Naive thymus-derived CD4-positive, alpha-beta T cell (primary cell): ENCODE measurements at regions of chr1 and their contacts with region 1.

Region 1: DNA sequence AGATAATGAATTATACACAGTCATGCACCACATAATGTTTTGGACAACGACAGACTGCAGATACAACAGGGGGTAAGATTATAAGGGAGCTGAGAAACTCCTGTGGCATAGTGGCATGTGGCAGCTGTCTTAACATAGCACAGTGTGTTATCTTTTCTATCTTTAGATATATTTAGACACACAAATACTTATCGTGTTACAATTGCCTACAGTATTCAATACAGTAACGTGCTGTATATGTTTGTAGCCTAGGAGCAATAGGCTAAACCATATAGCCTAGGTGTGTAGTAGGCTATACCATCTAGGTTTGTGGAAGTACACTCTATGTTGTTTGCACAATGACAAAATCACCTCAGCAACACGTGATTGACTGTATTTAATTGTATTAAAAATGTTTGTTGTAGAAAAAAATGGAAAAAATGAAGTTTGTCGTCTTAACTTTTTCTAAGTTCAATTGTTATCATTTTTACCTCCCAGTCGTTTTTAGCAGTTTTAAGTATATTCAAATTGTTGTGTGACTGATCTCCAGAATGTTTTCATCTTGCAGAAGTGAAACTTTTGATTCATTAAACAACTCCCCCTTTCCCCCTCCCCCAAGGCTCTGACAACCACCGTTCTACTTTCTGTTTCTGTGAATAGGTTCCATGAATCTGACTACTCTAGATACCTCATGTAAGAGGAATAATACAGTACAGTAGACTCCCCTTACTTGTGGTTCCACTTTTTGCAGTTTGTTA is 351.0 kb upstream of the B3GALT2 start:
- DNase-seq: peak in 7 of 9 donors; percentile 23 to 54 (median 45)
- ATAC-seq: peak; percentile 77
- H3K4me3 ChIP-seq: peak overlapping the region; percentile 32
- H3K4me3 Mint-ChIP-seq: peak overlapping the region in 9 of 10 donors; percentile 17 to 65 (median 44)
- H3K27ac ChIP-seq: no peak overlapping the region
- H3K27ac Mint-ChIP-seq: peak overlapping the region in 5 of 9 donors; percentile 2 to 89 (median 45)
- H3K4me1 ChIP-seq: peaks cover 14 to 41% of the 10 kb centered on the region in 2 donors
- H3K4me1 Mint-ChIP-seq: peaks cover 13 to 57% (median 46%) of the 10 kb centered on the region in 7 donors
- H3K27me3 ChIP-seq: no peaks in the 10 kb centered on the region
- H3K27me3 Mint-ChIP-seq: no peaks in the 10 kb centered on the region

Region 2: DNA sequence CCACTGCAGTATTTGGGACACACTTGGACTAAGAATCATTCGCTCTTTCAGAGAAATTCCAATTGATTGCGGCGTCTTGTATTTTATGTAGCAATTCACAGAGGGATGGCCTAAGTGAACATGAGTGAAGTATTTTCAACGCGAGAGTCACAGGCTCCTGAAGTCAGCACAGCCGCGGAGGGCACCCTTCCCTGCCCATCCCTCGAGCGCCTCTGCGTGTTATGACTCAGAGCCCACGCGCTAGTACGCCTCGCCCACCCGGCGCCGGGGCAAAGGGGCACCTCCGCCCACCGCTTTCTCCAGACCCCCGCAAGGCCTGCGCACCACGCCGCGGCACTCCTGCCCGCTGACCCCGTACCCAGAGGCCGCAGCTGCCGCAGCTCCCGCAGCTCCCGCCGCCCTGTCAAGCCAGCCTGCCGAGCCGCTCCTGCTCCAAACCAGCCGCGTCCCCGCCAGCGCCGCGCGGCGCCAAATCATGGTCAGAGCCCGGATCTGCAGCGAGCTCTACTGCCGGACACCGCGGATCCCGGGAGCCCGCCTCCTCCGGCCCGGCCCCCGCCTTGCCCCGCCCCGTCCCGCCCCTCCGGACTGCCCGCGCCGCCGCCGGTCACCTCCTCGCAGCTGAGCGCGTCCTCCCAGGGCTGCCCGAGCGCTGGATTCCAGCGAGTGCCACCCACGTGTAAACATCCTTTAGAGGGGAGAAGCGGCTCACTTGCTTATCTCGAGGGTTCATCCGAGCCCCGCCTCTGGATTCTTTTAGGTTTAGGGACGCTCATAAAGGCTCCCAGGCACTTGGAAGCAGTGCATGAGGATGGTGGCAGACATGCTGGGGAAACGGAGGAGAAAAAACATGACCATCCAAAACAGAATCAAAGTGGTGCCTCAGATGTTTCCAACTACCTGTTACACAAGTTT is 432.3 kb before region 1 on chr1 and contains the start of gene GLRX2:
- CTCF ChIA-PET with region 1: no interaction called
- POLR2A ChIA-PET with region 1: no interaction called
- intact Hi-C with region 1: loop called in 1 of 2 experiments (anchors 5 kb)
- DNase-seq: peak; percentile 30 to 68 (median 48)
- ATAC-seq: peak; percentile 91
- H3K4me3 ChIP-seq: peak within 1 kb of the TSS; percentile 67
- H3K4me3 Mint-ChIP-seq: peak within 1 kb of the TSS; percentile 91 to 98 (median 94)
- H3K27ac ChIP-seq: peak within 1 kb of the TSS; percentile 57
- H3K27ac Mint-ChIP-seq: peak within 1 kb of the TSS; percentile 75 to 94 (median 81)
- H3K4me1 ChIP-seq: peaks cover 3 to 16% of the 10 kb centered on the region in 2 donors
- H3K4me1 Mint-ChIP-seq: peaks cover 13 to 28% (median 21%) of the 10 kb centered on the region in 7 donors
- H3K27me3 ChIP-seq: no peaks in the 10 kb centered on the region
- H3K27me3 Mint-ChIP-seq: peaks cover 0 to 9% (median 0%) of the 10 kb centered on the region in 5 donors
- total RNA-seq, gene GLRX2: 6.8 to 18.8 (median 11.4) TPM

Region 3: DNA sequence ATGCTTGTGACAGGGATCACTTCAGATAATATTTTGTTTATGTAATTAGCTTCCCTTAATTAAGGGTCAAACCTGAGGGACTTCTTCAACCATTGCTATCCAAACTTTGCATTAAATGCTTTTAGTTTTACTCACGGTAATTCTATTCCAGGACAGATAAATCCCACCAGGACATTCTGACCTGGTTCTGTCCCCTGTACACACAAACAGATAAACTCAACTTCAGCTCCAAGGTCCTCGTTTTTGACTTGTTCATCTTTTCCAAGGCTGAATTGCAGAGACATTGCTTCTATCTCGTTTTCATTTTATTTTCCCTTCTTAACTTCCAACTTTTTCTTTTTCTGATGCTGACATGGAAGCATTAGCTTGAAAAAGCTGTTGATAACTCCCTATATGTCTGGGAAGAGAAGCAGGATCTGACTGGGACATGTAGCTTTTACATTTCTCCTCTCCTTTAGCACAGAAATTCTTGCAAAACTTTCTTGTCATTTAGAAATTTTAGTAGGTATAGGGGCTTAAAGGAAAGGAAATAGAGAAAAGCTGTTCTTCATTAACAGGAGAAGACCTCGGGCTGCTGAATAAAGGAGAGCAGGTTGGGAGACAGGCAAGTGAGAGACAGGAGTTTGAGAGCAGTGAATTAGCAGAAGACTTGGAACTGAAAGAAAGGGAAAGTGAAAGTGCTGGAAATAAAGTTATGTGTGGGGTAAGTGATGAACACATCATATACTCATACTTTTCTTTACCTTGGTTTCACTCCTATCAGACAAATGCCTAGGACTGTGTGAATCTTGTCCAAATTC is 119.3 kb before region 1 on chr1:
- CTCF ChIA-PET with region 1: no interaction called
- POLR2A ChIA-PET with region 1: no interaction called
- intact Hi-C with region 1: loop called in 1 of 2 experiments (anchors 2 kb)
- DNase-seq: peak in 7 of 9 donors; percentile 16 to 64 (median 47)
- ATAC-seq: peak; percentile 81
- H3K4me3 ChIP-seq: peak overlapping the region; percentile 45
- H3K4me3 Mint-ChIP-seq: peak overlapping the region; percentile 68 to 93 (median 87)
- H3K27ac ChIP-seq: peak overlapping the region; percentile 58
- H3K27ac Mint-ChIP-seq: peak overlapping the region; percentile 88 to 95 (median 91)
- H3K4me1 ChIP-seq: peaks cover 16 to 19% of the 10 kb centered on the region in 2 donors
- H3K4me1 Mint-ChIP-seq: peaks cover 15 to 57% (median 46%) of the 10 kb centered on the region in 7 donors
- H3K27me3 ChIP-seq: no peaks in the 10 kb centered on the region
- H3K27me3 Mint-ChIP-seq: no peaks in the 10 kb centered on the region

Region 4: DNA sequence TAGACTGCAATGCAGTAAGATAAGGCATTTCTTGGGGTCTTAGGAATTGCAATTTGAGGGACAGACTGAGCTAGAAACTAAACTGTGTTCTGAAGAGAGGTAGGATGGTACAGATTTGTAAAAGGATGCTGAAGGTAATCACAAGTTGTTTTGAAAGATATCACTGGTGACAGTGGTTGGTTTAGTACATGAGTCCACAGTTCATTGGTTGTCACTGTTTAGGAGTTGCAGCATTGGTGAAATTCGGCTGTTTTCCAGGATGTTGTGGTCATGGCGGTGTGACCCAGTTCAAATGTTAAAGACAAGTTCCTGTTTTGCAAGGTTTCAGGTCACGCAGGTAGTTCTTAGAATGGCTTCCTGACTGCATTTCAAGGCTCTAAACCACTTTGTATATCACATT is 58.2 kb before region 1 on chr1:
- CTCF ChIA-PET with region 1: no interaction called
- POLR2A ChIA-PET with region 1: interaction called, 17 read pairs
- intact Hi-C with region 1: loop called (anchors 1 kb)
- DNase-seq: peak; percentile 18 to 95 (median 91)
- ATAC-seq: peak; percentile 97
- H3K4me3 ChIP-seq: peak overlapping the region; percentile 24
- H3K4me3 Mint-ChIP-seq: peak overlapping the region; percentile 23 to 72 (median 60)
- H3K27ac ChIP-seq: peak overlapping the region; percentile 37
- H3K27ac Mint-ChIP-seq: peak overlapping the region; percentile 85 to 99 (median 94)
- H3K4me1 ChIP-seq: peaks cover 31 to 38% of the 10 kb centered on the region in 2 donors
- H3K4me1 Mint-ChIP-seq: peaks cover 27 to 72% (median 56%) of the 10 kb centered on the region in 7 donors
- H3K27me3 ChIP-seq: no peaks in the 10 kb centered on the region
- H3K27me3 Mint-ChIP-seq: no peaks in the 10 kb centered on the region

Region 5: DNA sequence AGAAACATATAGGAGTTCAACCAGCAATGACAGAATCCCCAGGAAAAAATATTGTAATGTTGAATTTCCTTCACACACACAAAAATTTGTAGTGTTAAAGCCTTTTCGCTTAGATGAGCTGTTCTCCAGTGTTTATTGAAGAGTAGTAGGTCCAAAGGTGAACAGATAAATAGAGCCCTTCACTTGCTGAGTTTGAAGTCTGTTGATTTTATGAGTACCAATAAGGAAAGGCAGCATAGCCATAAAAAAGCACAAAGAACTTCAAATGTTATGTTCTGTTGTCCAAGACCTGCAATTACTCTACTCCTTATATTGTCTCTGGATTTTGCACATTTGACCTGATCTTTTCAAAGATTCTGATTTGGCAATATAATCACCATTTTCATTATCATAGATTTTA is 11.6 kb after region 1 on chr1:
- CTCF ChIA-PET with region 1: no interaction called
- POLR2A ChIA-PET with region 1: interaction called, 12 read pairs
- intact Hi-C with region 1: no loop called
- DNase-seq: no peak
- ATAC-seq: no peak
- H3K4me3 ChIP-seq: no peak overlapping the region
- H3K4me3 Mint-ChIP-seq: peak overlapping the region in 1 of 10 donors; percentile 1
- H3K27ac ChIP-seq: no peak overlapping the region
- H3K27ac Mint-ChIP-seq: no peak overlapping the region
- H3K4me1 ChIP-seq: no peaks in the 10 kb centered on the region
- H3K4me1 Mint-ChIP-seq: peaks cover 0 to 14% (median 9%) of the 10 kb centered on the region in 7 donors
- H3K27me3 ChIP-seq: no peaks in the 10 kb centered on the region
- H3K27me3 Mint-ChIP-seq: no peaks in the 10 kb centered on the region

Region 6: GRCh38 chr1:193589597-193590040 is 52.2 kb after region 1 on chr1:
- CTCF ChIA-PET with region 1: no interaction called
- POLR2A ChIA-PET with region 1: no interaction called
- intact Hi-C with region 1: loop called in 1 of 2 experiments (anchors 1 kb)
- DNase-seq: no peak
- ATAC-seq: no peak
- H3K4me3 ChIP-seq: no peak overlapping the region
- H3K4me3 Mint-ChIP-seq: no peak overlapping the region
- H3K27ac ChIP-seq: no peak overlapping the region
- H3K27ac Mint-ChIP-seq: peak overlapping the region in 1 of 9 donors; percentile 26
- H3K4me1 ChIP-seq: no peaks in the 10 kb centered on the region
- H3K4me1 Mint-ChIP-seq: peaks cover 5 to 34% (median 11%) of the 10 kb centered on the region in 7 donors
- H3K27me3 ChIP-seq: no peaks in the 10 kb centered on the region
- H3K27me3 Mint-ChIP-seq: no peaks in the 10 kb centered on the region

Region 7: DNA sequence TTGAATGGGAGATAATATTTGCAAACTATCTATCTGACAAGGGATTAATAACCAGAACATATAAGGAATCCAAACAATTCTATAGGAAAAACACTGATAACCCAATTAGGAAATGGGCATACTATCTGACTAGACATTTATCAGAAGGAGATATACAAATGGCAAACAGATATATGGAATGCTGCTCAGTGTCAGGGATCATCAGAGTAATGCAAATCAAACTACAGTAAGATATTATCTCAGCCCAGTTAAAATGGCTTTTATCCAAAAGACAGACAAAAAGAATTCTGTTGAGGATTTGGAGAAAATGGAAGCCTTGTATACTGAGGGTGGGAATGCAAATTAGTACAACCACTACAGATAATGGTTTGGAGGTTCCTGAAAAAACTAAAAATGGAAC is 407.0 kb after region 1 on chr1:
- CTCF ChIA-PET with region 1: no interaction called
- POLR2A ChIA-PET with region 1: no interaction called
- intact Hi-C with region 1: no loop called
- DNase-seq: no peak
- ATAC-seq: no peak
- H3K4me3 ChIP-seq: no peak overlapping the region
- H3K4me3 Mint-ChIP-seq: no peak overlapping the region
- H3K27ac ChIP-seq: no peak overlapping the region
- H3K27ac Mint-ChIP-seq: no peak overlapping the region
- H3K4me1 ChIP-seq: no peaks in the 10 kb centered on the region
- H3K4me1 Mint-ChIP-seq: peaks cover 0 to 6% (median 0%) of the 10 kb centered on the region in 7 donors
- H3K27me3 ChIP-seq: no peaks in the 10 kb centered on the region
- H3K27me3 Mint-ChIP-seq: no peaks in the 10 kb centered on the region

Region 8: GRCh38 chr1:194289569-194290266 is 752.3 kb after region 1 on chr1:
- CTCF ChIA-PET with region 1: no interaction called
- POLR2A ChIA-PET with region 1: no interaction called
- intact Hi-C with region 1: loop called in 1 of 2 experiments (anchors 5 kb)
- DNase-seq: peak in 8 of 9 donors; percentile 23 to 84 (median 76)
- ATAC-seq: peak; percentile 97
- H3K4me3 ChIP-seq: peak overlapping the region; percentile 0
- H3K4me3 Mint-ChIP-seq: peak overlapping the region; percentile 38 to 71 (median 54)
- H3K27ac ChIP-seq: no peak overlapping the region
- H3K27ac Mint-ChIP-seq: peak overlapping the region in 7 of 9 donors; percentile 43 to 84 (median 69)
- H3K4me1 ChIP-seq: peaks cover 14 to 21% of the 10 kb centered on the region in 2 donors
- H3K4me1 Mint-ChIP-seq: peaks cover 5 to 47% (median 40%) of the 10 kb centered on the region in 7 donors
- H3K27me3 ChIP-seq: no peaks in the 10 kb centered on the region
- H3K27me3 Mint-ChIP-seq: no peaks in the 10 kb centered on the region